Mammary epithelial cell (primary cell): ENCODE measurements at regions of chr16 and their contacts with region 1.

Region 1: GRCh38 chr16:660459-661183 is 7.3 kb upstream of the RHOT2 start:
- DNase-seq: peak; percentile 51
- H3K4me3 ChIP-seq: no peak overlapping the region
- H3K27ac ChIP-seq: no peak overlapping the region
- H3K4me1 ChIP-seq: peaks cover 11% of the 10 kb centered on the region
- H3K27me3 ChIP-seq: no peaks in the 10 kb centered on the region
- CTCF ChIP-seq: peak; percentile 11 to 50

Region 2: GRCh38 chr16:546909-547770 is 113.5 kb before region 1 on chr16:
- CTCF ChIA-PET with region 1: no interaction called
- dilution Hi-C with region 1: no loop called
- in situ Hi-C with region 1: no loop called
- intact Hi-C with region 1: loop called (anchors 1 kb)
- DNase-seq: peak; percentile 37
- H3K4me3 ChIP-seq: no peak overlapping the region
- H3K27ac ChIP-seq: no peak overlapping the region
- H3K4me1 ChIP-seq: peaks cover 5% of the 10 kb centered on the region
- H3K27me3 ChIP-seq: no peaks in the 10 kb centered on the region
- CTCF ChIP-seq: peak; percentile 72 to 85

Region 3: GRCh38 chr16:621528-622105 is 39.0 kb before region 1 on chr16:
- CTCF ChIA-PET with region 1: no interaction called
- dilution Hi-C with region 1: no loop called
- in situ Hi-C with region 1: no loop called
- intact Hi-C with region 1: no loop called
- DNase-seq: no peak
- H3K4me3 ChIP-seq: no peak overlapping the region
- H3K27ac ChIP-seq: no peak overlapping the region
- H3K4me1 ChIP-seq: peaks cover 26% of the 10 kb centered on the region
- H3K27me3 ChIP-seq: no peaks in the 10 kb centered on the region
- CTCF ChIP-seq: no peak

Region 4: DNA sequence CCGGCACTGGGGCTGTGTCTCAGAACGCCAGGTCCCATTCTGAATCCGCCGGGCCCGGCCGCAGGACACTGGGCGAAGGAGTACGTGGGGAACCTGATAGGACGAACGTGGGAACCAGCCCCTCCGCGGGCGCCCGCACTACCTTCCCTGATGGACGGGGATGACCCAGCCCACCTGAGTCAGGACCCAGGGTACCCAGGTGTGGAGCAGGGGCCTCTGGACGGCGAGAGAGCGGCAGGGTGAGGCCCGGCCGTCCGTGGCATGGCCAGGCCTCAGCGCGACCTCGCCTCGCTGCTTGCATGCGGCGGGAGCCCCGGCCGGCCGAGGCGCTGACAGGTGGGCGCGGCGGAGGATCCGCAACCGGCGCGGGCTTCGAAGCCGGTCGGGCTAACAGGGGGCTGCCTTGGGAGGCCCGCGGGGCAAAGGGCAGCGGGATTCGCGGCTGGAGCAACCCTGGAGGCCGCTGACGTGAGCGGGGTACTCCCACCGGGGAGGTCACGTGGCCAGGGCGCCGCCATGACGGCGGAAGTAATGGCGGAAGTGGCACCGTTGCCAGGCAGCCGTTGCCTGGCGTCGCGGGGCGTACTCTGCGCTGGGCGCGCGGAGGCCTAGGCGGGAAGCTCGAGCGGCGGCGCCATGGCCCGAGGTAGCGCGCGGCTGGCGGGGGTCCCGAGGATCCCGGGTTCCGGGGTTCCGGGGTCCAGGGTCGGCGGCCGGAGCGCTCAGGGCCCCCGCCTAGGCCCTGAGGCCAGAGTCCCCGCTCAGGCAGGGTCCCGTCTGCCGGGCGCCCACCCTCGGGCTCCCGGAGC is 11.6 kb before region 1 on chr16 and contains the start of gene WDR90:
- CTCF ChIA-PET with region 1: no interaction called
- dilution Hi-C with region 1: no loop called
- in situ Hi-C with region 1: no loop called
- intact Hi-C with region 1: loop called (anchors 1 kb)
- DNase-seq: peak; percentile 89
- H3K4me3 ChIP-seq: peak within 1 kb of the TSS; percentile 64 to 68 (median 67)
- H3K27ac ChIP-seq: peak within 1 kb of the TSS; percentile 73
- H3K4me1 ChIP-seq: peaks cover 30% of the 10 kb centered on the region
- H3K27me3 ChIP-seq: no peaks in the 10 kb centered on the region
- CTCF ChIP-seq: no peak
- total RNA-seq, gene WDR90: 7.5 to 41.7 TPM

Region 5: GRCh38 chr16:852451-853185 is 192.0 kb after region 1 on chr16:
- CTCF ChIA-PET with region 1: no interaction called
- dilution Hi-C with region 1: no loop called
- in situ Hi-C with region 1: no loop called
- intact Hi-C with region 1: no loop called
- DNase-seq: no peak
- H3K4me3 ChIP-seq: no peak overlapping the region
- H3K27ac ChIP-seq: no peak overlapping the region
- H3K4me1 ChIP-seq: no peaks in the 10 kb centered on the region
- H3K27me3 ChIP-seq: no peaks in the 10 kb centered on the region
- CTCF ChIP-seq: no peak